Right lobe of liver (tissue), 6 donors: ENCODE measurements at regions of chr19 and their contacts with region 1.

Region 1: DNA sequence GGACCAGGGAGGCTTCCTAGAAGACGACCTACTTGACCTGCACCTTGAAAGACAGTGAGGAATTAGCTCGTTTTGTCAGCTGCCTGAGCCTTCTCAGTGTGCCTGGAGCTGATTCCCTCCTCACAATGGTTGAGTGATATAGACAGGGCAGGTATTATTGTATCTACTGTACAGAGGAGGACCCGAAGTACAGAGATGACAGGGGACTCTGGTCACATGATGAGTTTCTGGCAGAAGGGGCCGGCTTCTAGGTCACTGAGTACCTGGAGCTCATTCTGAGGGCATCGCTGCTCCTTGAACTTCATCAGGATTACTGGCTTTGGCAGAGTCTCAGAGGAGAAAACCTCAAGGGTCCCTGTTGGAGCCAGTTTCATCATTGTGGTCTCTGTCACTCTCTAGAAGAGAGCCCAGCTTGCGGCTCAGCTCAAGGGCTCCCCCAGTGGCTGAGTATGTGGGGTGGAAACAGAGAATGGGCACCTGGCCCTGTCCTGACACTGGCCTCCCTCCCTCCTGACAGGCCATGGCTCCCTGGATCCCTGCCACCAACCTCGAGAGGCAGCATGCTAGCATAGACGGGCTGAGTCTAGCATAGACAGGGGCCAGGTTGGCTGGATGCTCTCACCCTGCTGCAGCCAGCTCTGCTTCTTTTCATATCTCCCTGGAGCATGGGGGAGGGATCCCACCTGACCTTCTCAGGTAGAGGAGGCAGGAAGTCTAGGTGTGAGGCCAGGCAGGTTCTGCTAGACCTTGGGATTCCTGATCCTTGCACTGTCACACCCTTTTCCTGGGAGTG is 38.7 kb downstream of the NFIX start:
- DNase-seq: peak; percentile 79 to 89 (median 88)
- ATAC-seq: peak; percentile 85 to 87 (median 86)
- H3K4me3 ChIP-seq: no peak overlapping the region
- H3K27ac ChIP-seq: no peak overlapping the region
- H3K4me1 ChIP-seq: peaks cover 0 to 48% (median 23%) of the 10 kb centered on the region in 4 donors
- H3K27me3 ChIP-seq: no peaks in the 10 kb centered on the region
- CTCF ChIP-seq: peak; percentile 76 to 91 (median 85)
- POLR2A ChIP-seq: no peak

Region 2: GRCh38 chr19:13079542-13079986 is 45.5 kb after region 1 on chr19:
- intact Hi-C with region 1: no loop called
- DNase-seq: no peak
- ATAC-seq: no peak
- H3K4me3 ChIP-seq: no peak overlapping the region
- H3K27ac ChIP-seq: no peak overlapping the region
- H3K4me1 ChIP-seq: peaks cover 0 to 39% (median 11%) of the 10 kb centered on the region in 4 donors
- H3K27me3 ChIP-seq: no peaks in the 10 kb centered on the region
- CTCF ChIP-seq: no peak
- POLR2A ChIP-seq: no peak

Region 3: DNA sequence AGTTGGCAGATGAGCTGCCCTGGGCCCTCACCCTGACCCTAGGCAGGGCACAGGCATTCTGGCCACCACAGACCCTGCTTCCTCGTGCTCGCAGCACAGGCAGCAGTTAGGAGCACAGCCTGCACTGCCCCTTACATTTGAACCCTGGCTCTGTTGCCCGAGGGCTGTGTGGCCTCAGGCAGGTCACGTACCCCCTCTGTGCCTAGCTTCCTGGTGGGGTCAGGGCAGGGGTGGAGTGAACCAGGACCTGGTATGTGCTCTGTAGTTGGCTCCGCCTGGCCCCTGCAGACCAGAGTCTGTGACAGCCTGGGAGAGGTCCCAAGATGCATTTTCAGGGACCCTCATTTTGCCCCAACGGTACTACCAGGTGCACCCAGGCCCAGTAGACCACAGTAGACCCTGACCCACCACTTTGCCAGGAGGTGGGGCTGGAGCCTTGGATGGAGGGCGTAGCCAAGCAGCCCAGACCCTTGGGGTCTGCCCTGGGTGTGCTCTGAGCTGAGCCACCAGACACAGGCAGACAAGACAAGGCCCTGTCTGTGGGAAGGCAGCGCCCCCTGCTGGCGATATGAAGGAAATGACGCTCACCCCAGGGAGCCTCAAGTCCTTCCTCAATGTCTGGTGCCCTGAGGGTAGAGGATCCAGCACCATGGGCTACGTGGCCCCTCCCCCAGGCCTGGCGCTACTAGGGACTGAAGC is 59.5 kb after region 1 on chr19:
- intact Hi-C with region 1: loop called in 1 of 2 experiments (anchors 10 kb)
- DNase-seq: peak; percentile 77 to 86 (median 79)
- ATAC-seq: peak; percentile 69 to 77 (median 72)
- H3K4me3 ChIP-seq: no peak overlapping the region
- H3K27ac ChIP-seq: no peak overlapping the region
- H3K4me1 ChIP-seq: peaks cover 0 to 26% (median 3%) of the 10 kb centered on the region in 4 donors
- H3K27me3 ChIP-seq: peaks cover 0 to 6% of the 10 kb centered on the region in 2 donors
- CTCF ChIP-seq: peak; percentile 94 to 97 (median 95)
- POLR2A ChIP-seq: no peak